HEK293T (cell line): ENCODE measurements at regions of chr11 and their contacts with region 1.

Region 1: DNA sequence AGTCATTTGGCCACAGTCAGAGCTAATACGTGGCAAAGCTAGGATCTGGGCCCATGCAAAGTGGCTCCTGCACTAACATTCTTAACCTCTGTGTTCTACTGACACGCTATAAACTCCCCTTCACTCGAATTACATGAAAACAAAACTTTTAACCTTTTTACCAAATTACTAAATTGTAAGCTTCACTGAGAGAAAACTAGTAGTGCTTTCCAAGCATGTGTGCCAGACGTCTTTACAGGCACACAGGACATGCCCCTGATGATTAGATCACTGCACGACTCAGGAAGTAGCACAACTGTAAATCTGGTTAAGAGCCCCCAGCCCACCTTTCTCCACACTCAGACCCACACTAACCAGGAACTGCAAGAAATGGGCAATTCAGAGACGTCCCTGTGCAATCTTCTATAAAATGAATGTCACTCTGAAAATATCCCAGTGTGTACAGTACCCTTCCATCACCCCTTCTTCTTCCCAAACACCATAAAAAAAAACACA is 16.1 kb downstream of the PHF21A start:
- DNase-seq: no peak

Region 2: GRCh38 chr11:46044601-46045000 is 60.6 kb before region 1 on chr11:
- CTCF ChIA-PET with region 1: no interaction called
- POLR2A ChIA-PET with region 1: no interaction called
- DNase-seq: no peak

Region 3: GRCh38 chr11:46055371-46055770 is 49.8 kb before region 1 on chr11:
- CTCF ChIA-PET with region 1: no interaction called
- POLR2A ChIA-PET with region 1: no interaction called
- DNase-seq: no peak

Region 4: GRCh38 chr11:46121301-46121723 is 16.1 kb after region 1 on chr11 and contains the start of gene PHF21A:
- CTCF ChIA-PET with region 1: interaction called, 5 read pairs
- POLR2A ChIA-PET with region 1: interaction called, 11 read pairs
- DNase-seq: peak; percentile 78

Region 5: DNA sequence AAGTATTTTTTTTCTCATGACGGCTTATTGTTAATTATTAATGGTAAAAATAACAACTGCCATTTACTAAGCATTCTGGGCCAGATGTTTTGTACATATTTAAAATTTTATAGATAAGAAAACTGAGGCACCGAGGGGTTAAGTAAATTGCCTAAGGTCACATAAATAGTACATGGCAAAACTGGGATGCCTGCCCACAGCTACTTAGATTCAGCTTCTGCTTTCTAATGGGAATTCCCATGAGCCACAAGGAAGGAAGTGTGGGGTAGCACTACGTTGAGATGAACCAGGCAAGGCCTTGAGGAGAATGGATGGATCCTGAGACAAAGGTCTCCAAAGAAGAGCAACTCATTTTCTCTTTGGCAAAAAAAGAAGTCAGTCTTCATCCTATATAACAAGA is 27.9 kb after region 1 on chr11:
- CTCF ChIA-PET with region 1: no interaction called
- POLR2A ChIA-PET with region 1: no interaction called
- DNase-seq: no peak